ENCODE measurements at regions of chr14 and their contacts with region 1.

Region 1: GRCh38 chr14:93231129-93231979 is 24.3 kb downstream of the UBR7 start:
- DNase-seq: no peak
- ATAC-seq: peak; percentile 70
- H3K4me3 ChIP-seq: peak overlapping the region; percentile 44 to 76
- H3K27ac ChIP-seq: 0 out of 2 replicates have a peak overlapping the region, but pooled peaks have one; percentile 35
- H3K4me1 ChIP-seq: no peaks in the 10 kb centered on the region
- H3K27me3 ChIP-seq: no peaks in the 10 kb centered on the region
- CTCF ChIP-seq: no peak

Region 2: DNA sequence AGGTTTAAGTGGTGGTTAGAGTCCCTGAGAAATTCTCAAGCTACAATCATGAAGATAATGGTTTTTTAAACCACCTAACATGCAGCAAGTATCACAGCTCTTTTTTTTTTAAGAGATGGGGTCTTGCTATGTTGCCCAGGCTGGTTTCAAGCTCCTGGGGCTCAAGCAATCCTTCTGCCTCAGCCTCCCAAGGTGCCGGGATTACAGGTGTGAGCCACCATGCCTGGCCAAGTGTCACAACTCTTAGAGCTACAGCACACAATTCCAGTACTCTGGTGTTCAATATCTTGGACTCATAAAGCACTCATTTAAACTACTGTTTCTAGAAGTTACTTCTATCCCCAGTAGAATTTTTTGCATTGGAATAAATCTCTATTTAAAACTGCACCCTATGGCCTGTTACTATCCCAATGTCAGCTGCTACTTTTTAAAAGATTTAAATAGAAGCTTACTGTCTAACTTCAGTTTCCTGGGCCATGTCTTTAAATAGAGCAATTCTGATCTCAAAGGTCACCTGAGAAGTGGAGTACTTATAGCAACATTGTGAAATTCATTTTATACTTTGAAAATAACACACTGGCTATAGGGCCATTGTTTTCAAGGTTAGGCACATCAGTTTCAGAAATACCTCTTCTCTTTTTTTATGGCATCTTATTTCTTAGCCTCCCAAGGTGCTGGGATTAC is 35.9 kb before region 1 on chr14:
- CTCF ChIA-PET with region 1: no interaction called
- POLR2A ChIA-PET with region 1: no interaction called
- in situ Hi-C with region 1: no loop called
- intact Hi-C with region 1: no loop called
- DNase-seq: no peak
- ATAC-seq: no peak
- H3K4me3 ChIP-seq: no peak overlapping the region
- H3K27ac ChIP-seq: no peak overlapping the region
- H3K4me1 ChIP-seq: no peaks in the 10 kb centered on the region
- H3K27me3 ChIP-seq: no peaks in the 10 kb centered on the region
- CTCF ChIP-seq: no peak

Region 3: DNA sequence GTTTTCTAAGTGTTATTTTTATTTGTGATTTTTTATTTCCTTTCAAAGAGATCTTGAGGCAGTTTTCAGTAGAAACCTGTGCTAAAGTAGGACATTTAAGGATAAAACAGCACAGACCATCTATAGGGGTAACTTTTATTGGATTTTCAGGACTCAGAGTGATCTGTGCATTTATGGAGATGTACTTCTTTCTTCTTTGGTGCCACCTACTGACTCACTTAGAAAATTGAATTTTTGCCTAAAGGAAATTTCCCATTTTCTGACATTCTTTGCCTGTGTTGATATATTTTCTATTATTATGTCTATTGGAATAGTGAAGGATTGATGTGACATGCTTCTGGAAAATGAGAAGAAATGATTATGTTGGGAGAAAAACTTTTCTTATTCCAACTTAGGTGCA is 312.4 kb after region 1 on chr14:
- CTCF ChIA-PET with region 1: no interaction called
- POLR2A ChIA-PET with region 1: no interaction called
- in situ Hi-C with region 1: no loop called
- intact Hi-C with region 1: loop called (anchors 10 kb)
- DNase-seq: no peak
- ATAC-seq: no peak
- H3K4me3 ChIP-seq: no peak overlapping the region
- H3K27ac ChIP-seq: no peak overlapping the region
- H3K4me1 ChIP-seq: no peaks in the 10 kb centered on the region
- H3K27me3 ChIP-seq: peaks cover 2% of the 10 kb centered on the region
- CTCF ChIP-seq: peak; percentile 43; the same call in 1 of the 2 replicates

Region 4: DNA sequence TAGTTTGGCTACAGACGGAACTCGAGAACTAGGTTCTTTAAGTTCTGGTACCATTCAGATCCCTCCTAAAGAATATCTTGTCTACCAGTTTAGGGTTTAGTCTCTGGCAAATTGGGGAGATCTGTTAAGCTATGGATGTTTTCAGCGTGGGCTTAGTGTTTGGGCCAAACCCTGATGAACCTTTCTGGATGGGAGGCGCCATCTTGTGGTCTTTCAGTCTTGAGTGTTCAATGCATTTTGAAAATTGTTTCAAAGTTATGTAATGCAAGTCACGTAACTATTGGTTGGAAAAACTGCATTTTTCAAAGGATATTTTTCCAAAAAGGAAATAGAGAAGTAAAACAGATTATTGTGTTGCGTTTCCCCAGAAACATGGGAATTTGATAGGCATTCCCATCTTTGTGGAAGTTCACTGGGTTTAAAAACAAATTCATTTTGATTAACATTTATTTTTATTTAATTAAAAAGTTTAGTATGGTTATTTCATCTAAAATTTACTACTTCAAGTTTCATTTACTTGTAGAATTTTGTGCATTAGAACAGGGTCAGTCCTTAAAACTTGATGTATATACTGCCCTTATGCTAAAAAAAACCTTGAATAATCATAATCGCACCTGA is 387.9 kb after region 1 on chr14:
- CTCF ChIA-PET with region 1: no interaction called
- POLR2A ChIA-PET with region 1: no interaction called
- in situ Hi-C with region 1: no loop called
- intact Hi-C with region 1: loop called (anchors 10 kb)
- DNase-seq: peak; percentile 8
- ATAC-seq: no peak
- H3K4me3 ChIP-seq: no peak overlapping the region
- H3K27ac ChIP-seq: no peak overlapping the region
- H3K4me1 ChIP-seq: no peaks in the 10 kb centered on the region
- H3K27me3 ChIP-seq: peaks cover 7% of the 10 kb centered on the region
- CTCF ChIP-seq: peak; percentile 76